ENCODE measurements at regions of chr20 and their contacts with region 1.

Region 1: DNA sequence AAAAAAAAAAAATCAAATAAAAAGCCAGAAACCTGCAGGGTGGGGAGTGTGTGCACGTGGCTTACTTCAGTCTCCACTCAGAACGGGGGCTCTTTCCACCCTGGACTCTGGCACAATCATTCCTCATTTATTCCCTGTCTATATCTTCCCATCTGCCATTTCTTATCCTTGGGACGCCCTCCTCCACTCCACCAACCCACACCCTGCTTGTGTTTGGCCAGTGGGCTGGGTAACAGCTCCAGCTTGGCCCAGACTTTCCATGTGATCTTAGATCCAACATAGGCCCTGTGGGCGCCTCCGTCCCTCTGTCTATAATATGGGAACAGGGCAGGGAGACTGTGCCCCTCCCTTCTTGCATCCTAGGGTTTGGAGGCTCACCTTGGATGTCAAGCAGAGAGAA is 68.1 kb downstream of the CD40 start:
- H3K4me3 ChIP-seq: no peak overlapping the region
- H3K27ac ChIP-seq: no peak overlapping the region
- H3K4me1 ChIP-seq: no peaks in the 10 kb centered on the region
- CTCF ChIP-seq: no peak

Region 2: GRCh38 chr20:46174469-46175128 is 11.6 kb before region 1 on chr20:
- CTCF ChIA-PET with region 1: interaction called, 10 read pairs
- POLR2A ChIA-PET with region 1: no interaction called
- H3K4me3 ChIP-seq: no peak overlapping the region
- H3K27ac ChIP-seq: no peak overlapping the region
- H3K4me1 ChIP-seq: no peaks in the 10 kb centered on the region
- CTCF ChIP-seq: peak; percentile 8; the same call in 1 of the 2 replicates

Measured in HEK293 (cell line).